H1 (cell line): ENCODE measurements at regions of chr10 and their contacts with region 1.

Region 1: GRCh38 chr10:127913368-127913759 is 6.5 kb downstream of the PTPRE start:
- DNase-seq: no peak
- H3K4me3 ChIP-seq: no peak overlapping the region
- H3K27ac ChIP-seq: no peak overlapping the region
- H3K4me1 ChIP-seq: peaks cover 0 to 2% (median 0%) of the 10 kb centered on the region in 4 experiments; a peak in 3 of 7 replicates
- H3K27me3 ChIP-seq: peaks cover 0 to 5% (median 2%) of the 10 kb centered on the region in 4 experiments; a peak in 3 of 7 replicates
- CTCF ChIP-seq: no peak
- EP300 ChIP-seq: no peak
- POLR2A ChIP-seq: no peak
- RAD21 ChIP-seq: no peak

Region 2: DNA sequence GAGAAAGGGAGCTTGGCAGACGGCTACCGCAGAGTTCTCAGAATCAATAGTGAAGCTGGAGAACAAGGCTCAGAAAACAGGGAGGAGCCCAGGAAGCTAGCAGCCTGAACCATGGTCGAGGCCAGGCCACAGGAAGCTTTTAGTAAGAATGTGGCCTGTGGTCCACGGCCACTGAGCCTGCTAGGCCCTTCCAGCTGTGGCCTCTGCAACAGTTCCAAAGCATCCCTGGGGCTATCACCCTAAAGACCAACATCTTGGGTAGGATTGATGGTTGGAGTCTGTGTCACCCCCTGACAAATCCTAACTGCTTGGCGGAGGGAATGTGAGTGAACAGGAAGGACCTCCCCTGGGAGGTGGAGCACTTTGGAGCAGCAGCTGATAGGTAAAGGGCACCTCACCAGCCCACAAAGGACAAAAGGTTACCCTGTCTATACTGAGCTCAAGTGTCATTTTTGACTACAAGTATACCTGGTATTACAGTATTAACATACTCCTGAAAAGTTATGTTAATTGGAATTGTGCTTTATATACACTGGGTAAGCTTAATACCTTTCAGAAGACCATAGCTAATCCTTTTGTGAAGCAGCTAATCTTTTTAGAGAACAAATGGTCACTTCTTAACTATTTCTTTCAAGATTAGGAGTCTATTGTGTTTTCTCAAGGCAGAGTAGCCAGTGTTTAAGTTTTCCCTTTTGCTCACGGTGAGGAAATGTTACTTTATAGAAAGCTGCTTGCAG is 12.3 kb after region 1 on chr10:
- CTCF ChIA-PET with region 1: interaction called, 11 read pairs
- POLR2A ChIA-PET with region 1: no interaction called
- DNase-seq: no peak
- H3K4me3 ChIP-seq: no peak overlapping the region
- H3K27ac ChIP-seq: no peak overlapping the region
- H3K4me1 ChIP-seq: no peaks in the 10 kb centered on the region
- H3K27me3 ChIP-seq: no peaks in the 10 kb centered on the region
- CTCF ChIP-seq: no peak
- EP300 ChIP-seq: no peak
- POLR2A ChIP-seq: no peak
- RAD21 ChIP-seq: no peak